WTC11 (cell line): ENCODE measurements at regions of chr5 and their contacts with region 1.

Region 1: GRCh38 chr5:170278611-170279452 is 18.7 kb downstream of the LCP2 start:
- DNase-seq: peak; percentile 26
- ATAC-seq: peak; percentile 8
- H3K4me3 Mint-ChIP-seq: no peak overlapping the region
- H3K27ac Mint-ChIP-seq: 0 out of 2 replicates have a peak overlapping the region, but pooled peaks have one; percentile 9
- H3K4me1 Mint-ChIP-seq: peaks cover 54% of the 10 kb centered on the region
- H3K27me3 Mint-ChIP-seq: peaks cover 27% of the 10 kb centered on the region
- CTCF ChIP-seq: no peak

Region 2: GRCh38 chr5:170333161-170333910 is 54.5 kb after region 1 on chr5:
- CTCF ChIA-PET with region 1: interaction called, 38 read pairs
- POLR2A ChIA-PET with region 1: no interaction called
- DNase-seq: peak; percentile 61
- ATAC-seq: peak; percentile 40
- H3K4me3 Mint-ChIP-seq: peak overlapping the region; percentile 47
- H3K27ac Mint-ChIP-seq: peak overlapping the region; percentile 96
- H3K4me1 Mint-ChIP-seq: peaks cover 75% of the 10 kb centered on the region
- H3K27me3 Mint-ChIP-seq: no peaks in the 10 kb centered on the region; the same call in 1 of the 2 replicates
- CTCF ChIP-seq: no peak

Region 3: GRCh38 chr5:170338933-170339779 is 60.3 kb after region 1 on chr5:
- CTCF ChIA-PET with region 1: interaction called, 38 read pairs
- POLR2A ChIA-PET with region 1: no interaction called
- DNase-seq: peak; percentile 64
- ATAC-seq: peak; percentile 84
- H3K4me3 Mint-ChIP-seq: no peak overlapping the region
- H3K27ac Mint-ChIP-seq: no peak overlapping the region
- H3K4me1 Mint-ChIP-seq: peaks cover 58% of the 10 kb centered on the region
- H3K27me3 Mint-ChIP-seq: no peaks in the 10 kb centered on the region; the same call in none of the 2 replicates
- CTCF ChIP-seq: peak; percentile 63